Heart right ventricle (tissue), 16 donors: ENCODE measurements at regions of chr20 and their contacts with region 1.

Region 1: GRCh38 chr20:19784511-19785172 is 26.6 kb downstream of the RIN2 start:
- DNase-seq: peak; percentile 31 to 81
- ATAC-seq: peak; percentile 67 to 89 (median 82)
- H3K4me3 ChIP-seq: peak overlapping the region in 1 of 10 donors; percentile 1
- H3K27ac ChIP-seq: peak overlapping the region; percentile 32 to 91 (median 76)
- H3K4me1 ChIP-seq: peaks cover 28 to 67% (median 58%) of the 10 kb centered on the region in 9 donors
- H3K27me3 ChIP-seq: no peaks in the 10 kb centered on the region
- CTCF ChIP-seq: peak; percentile 59 to 87 (median 78)

Region 2: GRCh38 chr20:19757487-19758132 is 27.0 kb before region 1 on chr20:
- intact Hi-C with region 1: loop called in 3 of 10 experiments (anchors 2 kb)
- DNase-seq: peak; percentile 91 to 94
- ATAC-seq: peak; percentile 86 to 93 (median 92)
- H3K4me3 ChIP-seq: peak overlapping the region; percentile 53 to 95 (median 71)
- H3K27ac ChIP-seq: peak overlapping the region; percentile 91 to 100 (median 94)
- H3K4me1 ChIP-seq: peaks cover 15 to 50% (median 43%) of the 10 kb centered on the region in 9 donors
- H3K27me3 ChIP-seq: peaks cover 0 to 8% (median 0%) of the 10 kb centered on the region in 7 donors
- CTCF ChIP-seq: no peak

Region 3: GRCh38 chr20:19828232-19828631 is 43.6 kb after region 1 on chr20:
- intact Hi-C with region 1: loop called in 3 of 10 experiments (anchors 5 kb)
- DNase-seq: no peak
- ATAC-seq: peak in 7 of 8 donors; percentile 26 to 57 (median 38)
- H3K4me3 ChIP-seq: no peak overlapping the region
- H3K27ac ChIP-seq: peak overlapping the region in 3 of 10 donors; percentile 6 to 50 (median 41)
- H3K4me1 ChIP-seq: peaks cover 6 to 56% (median 38%) of the 10 kb centered on the region in 9 donors
- H3K27me3 ChIP-seq: no peaks in the 10 kb centered on the region
- CTCF ChIP-seq: peak in 7 of 9 donors; percentile 29 to 64 (median 43)